ENCODE measurements at regions of chr6 and their contacts with region 1.

Region 1: GRCh38 chr6:109382576-109383437 is 540 bp upstream of the CD164 start:
- DNase-seq: peak; percentile 94
- H3K4me3 Mint-ChIP-seq: peak overlapping the region; percentile 96
- H3K27ac Mint-ChIP-seq: peak overlapping the region; percentile 100
- H3K4me1 Mint-ChIP-seq: peaks cover 35% of the 10 kb centered on the region
- H3K27me3 Mint-ChIP-seq: no peaks in the 10 kb centered on the region

Region 2: DNA sequence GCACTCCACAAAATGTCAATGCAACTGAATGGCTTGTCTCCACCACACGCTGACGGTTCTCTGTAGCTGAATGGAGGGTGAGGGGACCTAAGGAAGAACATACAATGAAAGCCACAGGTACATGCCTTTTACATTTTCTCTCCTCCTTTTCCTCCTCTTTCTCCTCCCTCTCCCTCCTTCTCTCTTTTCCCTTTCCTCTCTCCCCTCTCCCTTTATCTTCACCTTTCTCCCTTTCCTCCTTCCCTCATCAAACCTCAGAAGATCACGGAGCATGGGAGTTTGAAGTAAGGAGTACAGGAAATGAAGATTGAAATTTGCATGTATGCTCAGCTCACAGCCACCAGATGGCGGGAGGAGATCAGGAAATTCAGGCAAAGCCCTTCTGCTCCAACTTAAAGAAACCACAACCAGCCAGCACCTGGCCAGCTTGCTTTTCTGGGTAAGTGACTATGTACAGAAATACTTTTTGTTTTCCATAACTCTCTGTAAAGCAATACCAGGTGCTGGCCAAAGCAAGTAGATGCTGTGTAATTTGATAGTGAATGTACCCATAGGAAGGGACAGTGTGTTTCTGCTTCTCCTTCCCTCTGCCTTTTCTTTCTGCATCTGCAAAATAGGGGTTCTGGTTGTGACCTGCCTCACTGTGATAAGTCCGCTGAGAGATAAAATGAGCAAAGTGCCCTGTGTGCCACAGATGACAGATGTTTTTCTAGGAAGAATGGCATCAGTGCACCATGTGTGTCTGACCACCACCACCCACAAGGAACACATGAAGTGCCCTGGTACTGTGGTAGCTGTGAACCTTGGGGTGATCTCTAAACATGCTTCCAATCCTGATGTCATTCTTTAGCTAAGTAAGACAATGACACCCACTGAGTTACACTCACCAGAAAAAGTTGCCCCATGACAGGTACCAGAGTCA is 840.7 kb before region 1 on chr6:
- CTCF ChIA-PET with region 1: no interaction called
- intact Hi-C with region 1: loop called (anchors 5 kb)
- DNase-seq: peak; percentile 83
- H3K4me3 Mint-ChIP-seq: peak overlapping the region; percentile 34
- H3K27ac Mint-ChIP-seq: no peak overlapping the region
- H3K4me1 Mint-ChIP-seq: peaks cover 7% of the 10 kb centered on the region
- H3K27me3 Mint-ChIP-seq: peaks cover 8% of the 10 kb centered on the region

Region 3: DNA sequence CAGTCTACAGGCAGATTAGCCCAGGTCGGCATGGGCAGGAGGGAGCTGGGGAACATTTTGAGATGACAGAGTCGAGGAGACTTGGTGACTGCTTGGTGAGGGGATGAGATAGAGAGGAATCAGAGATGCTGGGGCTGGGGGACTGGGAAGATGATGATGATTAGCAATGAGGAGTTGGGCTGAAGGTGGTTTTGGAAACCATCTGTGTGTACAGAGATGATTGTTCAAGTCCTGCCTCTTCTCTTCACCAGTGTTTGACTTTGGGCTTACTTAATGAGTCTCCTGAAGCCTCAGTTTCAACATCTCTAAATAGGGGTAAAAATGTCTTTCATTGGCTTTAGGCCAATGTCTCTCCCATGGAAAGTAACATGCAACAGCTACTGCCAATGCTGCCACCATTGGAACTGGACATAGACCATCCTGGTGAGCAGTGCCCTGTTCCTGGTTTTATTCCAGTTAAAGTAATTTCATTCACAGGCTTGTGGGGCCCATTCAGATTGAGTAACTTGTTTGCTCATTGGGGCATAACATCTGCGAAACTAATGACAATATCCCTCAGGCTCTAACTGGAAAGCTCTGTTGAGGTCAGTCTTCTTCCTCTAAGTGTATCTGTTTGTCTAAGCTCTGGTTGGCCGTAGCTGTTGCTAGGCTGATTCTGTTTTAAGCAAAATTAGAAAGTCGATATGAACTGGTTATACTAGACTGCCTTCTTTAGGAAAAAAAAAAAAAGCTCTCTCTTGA is 435.5 kb before region 1 on chr6:
- CTCF ChIA-PET with region 1: no interaction called
- intact Hi-C with region 1: loop called (anchors 5 kb)
- DNase-seq: no peak
- H3K4me3 Mint-ChIP-seq: no peak overlapping the region
- H3K27ac Mint-ChIP-seq: no peak overlapping the region
- H3K4me1 Mint-ChIP-seq: peaks cover 27% of the 10 kb centered on the region
- H3K27me3 Mint-ChIP-seq: no peaks in the 10 kb centered on the region

Region 4: DNA sequence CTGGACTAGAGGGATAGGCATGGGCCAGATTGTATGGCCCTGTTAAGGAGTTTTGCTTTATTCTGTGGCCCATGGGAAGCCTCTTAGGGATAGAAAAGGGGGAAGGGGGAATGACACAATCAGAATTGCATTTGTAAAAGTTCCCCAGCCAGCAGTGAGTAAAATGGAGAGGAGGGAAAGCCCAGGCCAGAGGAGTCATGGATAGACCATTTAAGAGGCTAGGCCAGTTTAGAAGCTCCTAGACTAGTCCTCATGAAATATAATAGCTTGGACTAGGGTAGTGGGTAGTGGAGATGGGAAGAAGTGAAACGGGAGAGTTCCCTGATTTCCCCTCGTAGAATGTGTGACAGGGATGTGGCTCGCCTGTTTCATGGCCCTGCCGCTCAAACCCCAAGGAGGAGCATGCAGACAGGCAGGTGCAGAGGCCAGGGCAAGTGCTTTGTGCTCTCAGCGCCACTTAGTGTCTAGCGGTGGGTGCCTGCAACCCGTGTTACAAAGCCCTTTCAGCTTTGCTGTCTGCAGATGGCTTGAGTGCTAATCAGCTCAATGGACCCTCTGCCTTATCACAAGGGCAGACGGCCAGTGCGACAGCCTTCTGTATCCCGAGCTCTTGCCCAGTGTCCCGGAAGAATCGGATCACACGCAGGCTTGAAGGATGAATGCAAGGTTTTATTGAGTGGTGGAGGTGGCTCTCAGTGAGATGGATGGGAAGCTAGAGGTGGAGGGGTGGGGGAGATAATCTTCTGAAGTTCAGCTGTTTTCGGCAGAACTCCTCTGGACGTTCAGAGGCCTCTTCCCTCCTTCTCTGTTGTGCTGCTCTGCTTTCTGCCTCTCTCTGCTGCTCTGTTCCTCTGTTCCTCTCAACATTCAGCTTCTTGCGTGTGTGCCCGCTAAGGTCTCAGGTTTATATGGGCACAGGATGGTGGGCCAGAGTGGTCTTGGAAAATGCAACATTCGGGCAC is 146.4 kb before region 1 on chr6:
- CTCF ChIA-PET with region 1: interaction called, 4 read pairs
- intact Hi-C with region 1: loop called (anchors 1 kb)
- DNase-seq: peak; percentile 53
- H3K4me3 Mint-ChIP-seq: peak overlapping the region; percentile 11
- H3K27ac Mint-ChIP-seq: no peak overlapping the region
- H3K4me1 Mint-ChIP-seq: peaks cover 11% of the 10 kb centered on the region
- H3K27me3 Mint-ChIP-seq: no peaks in the 10 kb centered on the region

Region 5: DNA sequence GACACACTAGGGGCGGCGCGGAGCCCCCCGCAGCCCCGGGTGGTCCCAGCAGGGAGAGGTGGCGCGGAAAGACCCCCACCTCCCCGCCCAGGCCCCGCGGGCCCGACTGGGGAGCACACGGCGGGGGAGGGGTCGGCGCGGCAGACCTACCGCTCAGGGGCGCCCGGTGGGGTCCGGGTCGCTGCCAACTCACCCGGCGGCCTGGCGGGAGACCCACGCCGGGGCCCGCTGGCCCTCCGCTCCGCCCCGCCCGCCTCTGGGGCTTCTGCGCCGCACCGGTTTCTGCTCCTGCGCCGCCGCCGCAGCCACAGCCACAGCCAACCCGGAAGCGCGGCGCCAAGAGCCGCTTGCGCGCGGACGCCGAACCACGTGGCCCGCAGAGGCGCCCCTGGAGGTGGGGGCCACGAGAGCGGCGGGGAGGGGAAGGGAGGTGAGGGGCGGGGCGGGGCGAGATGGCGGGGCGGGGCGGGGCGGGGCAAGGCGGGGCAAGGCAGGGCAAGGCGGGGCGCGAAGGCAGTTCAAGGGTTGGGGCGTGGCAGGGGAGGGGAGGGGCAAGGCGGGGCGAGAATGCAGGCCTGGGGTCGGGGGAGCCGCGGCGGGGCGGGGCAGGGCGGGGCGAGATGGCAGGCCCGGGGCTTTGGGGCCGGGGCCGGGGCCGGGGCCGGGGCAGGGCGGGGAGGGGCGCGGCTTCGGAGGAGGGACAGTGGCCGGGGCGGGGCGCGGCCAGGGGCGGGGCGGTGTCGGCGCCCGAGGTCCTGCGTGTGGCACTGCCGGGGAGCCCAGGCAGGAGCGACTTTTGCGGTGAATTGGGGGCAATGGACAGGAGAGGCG is 100.3 kb after region 1 on chr6 and contains the start of gene ZBTB24:
- CTCF ChIA-PET with region 1: interaction called, 3 read pairs
- intact Hi-C with region 1: loop called (anchors 1 kb)
- DNase-seq: peak; percentile 88
- H3K4me3 Mint-ChIP-seq: peak within 1 kb of the TSS; percentile 85
- H3K27ac Mint-ChIP-seq: peak within 1 kb of the TSS; percentile 80
- H3K4me1 Mint-ChIP-seq: peaks cover 37% of the 10 kb centered on the region
- H3K27me3 Mint-ChIP-seq: no peaks in the 10 kb centered on the region
- total RNA-seq, gene ZBTB24: 6.9 to 7.4 TPM

Region 6: DNA sequence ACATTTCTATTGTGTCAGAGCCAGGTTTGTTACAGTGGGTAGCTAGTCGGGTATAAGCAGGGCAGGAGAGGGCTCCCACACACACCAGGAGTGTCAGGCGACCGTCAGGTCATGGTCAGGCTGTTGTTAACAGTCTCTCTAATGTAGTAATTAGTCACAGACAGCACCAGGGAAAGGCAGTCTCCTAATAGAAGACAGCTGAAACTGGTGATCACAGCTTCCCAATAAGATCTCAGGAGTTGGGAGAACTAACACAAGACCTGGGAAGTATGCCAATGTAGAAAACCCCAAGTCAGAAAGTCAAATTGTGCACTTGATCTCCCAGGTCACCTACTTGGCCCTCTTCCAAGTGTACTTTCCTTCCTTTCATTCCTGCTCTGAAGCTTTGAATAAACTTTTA is 542.3 kb after region 1 on chr6:
- CTCF ChIA-PET with region 1: no interaction called
- intact Hi-C with region 1: no loop called
- DNase-seq: no peak
- H3K4me3 Mint-ChIP-seq: no peak overlapping the region
- H3K27ac Mint-ChIP-seq: no peak overlapping the region
- H3K4me1 Mint-ChIP-seq: no peaks in the 10 kb centered on the region
- H3K27me3 Mint-ChIP-seq: peaks cover 8% of the 10 kb centered on the region

Region 7: DNA sequence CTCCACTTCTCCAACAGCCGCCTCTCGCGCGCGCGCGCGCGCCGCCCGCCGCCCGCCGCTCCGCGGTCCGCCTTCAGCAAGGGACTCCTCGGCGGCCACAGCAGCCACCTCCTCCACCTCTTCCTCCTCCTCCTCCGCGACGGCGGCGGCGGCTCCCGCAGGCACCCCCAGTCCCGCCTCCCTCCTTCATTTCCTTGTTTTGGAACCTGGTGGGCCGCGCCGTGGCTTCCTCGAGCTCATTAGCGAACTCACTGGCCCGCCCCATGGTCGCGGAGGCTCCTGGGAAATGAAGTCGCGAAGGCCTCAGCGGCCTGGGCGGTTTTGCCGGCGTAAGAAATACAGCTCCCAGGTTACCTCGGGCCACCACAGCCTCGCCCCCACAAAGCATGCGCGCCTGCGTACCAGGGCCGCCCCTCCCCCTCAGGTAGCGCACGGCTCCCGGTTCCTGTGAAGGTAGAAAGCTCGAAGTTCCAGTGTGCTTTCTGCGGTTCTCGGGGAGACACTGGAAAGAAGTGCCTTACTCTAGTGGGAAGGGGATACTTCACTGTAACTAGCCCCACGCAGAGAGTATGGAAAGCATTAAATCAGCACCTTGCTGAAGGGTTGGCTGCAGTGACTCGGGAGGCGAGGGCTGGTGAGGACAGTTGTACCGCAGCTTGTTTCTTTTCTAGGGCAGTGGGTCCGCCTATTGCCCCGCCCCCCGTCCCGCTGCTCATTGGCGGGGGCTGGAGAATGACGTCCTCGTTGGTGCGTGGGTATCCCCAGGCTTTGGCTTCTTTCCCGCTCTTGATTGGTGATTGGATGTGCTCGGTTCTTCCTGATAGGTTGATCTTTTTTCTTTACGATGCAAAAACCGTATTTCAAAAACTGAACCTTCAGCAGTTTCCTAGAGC is 1432.7 kb after region 1 on chr6 and contains the start of gene CDK19:
- CTCF ChIA-PET with region 1: no interaction called
- intact Hi-C with region 1: loop called (anchors 2 kb)
- DNase-seq: peak; percentile 99
- H3K4me3 Mint-ChIP-seq: peak within 1 kb of the TSS; percentile 100
- H3K27ac Mint-ChIP-seq: peak within 1 kb of the TSS; percentile 95
- H3K4me1 Mint-ChIP-seq: peaks cover 19% of the 10 kb centered on the region
- H3K27me3 Mint-ChIP-seq: no peaks in the 10 kb centered on the region
- total RNA-seq, gene CDK19: 11.0 to 11.7 TPM